ENCODE measurements at regions of chr1 and their contacts with region 1.

Region 1: DNA sequence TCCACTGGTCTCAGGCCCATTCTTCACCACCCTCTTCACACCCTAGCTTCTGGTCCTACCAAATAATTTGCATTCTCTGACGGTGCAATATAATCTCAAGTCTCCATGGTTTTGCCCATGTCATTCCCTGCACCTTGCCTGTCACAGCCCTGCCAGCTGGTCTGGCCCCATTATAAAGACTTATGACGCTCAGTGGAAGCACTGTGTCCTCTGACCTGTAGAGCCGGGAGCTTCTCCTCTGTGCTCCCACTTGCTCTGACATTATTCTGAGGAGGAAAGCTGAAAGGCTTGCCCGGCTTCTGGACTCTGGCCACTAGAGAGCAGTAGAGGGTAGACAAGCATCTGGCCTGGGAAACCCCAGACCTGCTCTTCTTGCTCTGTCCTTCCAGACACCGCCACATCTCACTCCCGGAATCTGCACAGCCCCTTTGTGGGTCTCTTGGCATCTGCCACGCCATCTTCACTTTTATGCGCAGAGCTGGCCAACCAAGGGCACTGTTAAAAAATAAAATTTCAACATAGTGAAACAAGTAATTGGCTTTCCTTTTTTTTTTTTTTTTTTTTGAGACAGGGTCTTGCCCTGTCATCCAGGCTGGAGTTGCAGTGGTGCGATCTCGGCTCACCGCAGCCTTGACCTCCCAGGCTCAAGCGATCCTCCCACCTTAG is 44.4 kb downstream of the NENF start:
- DNase-seq: peak; percentile 83
- H3K4me3 ChIP-seq: no peak overlapping the region
- H3K27ac ChIP-seq: no peak overlapping the region
- H3K4me1 ChIP-seq: peaks cover 13% of the 10 kb centered on the region
- H3K27me3 ChIP-seq: peaks cover 0 to 8% of the 10 kb centered on the region in 2 experiments
- CTCF ChIP-seq: peak; percentile 86 to 93
- POLR2A ChIP-seq: no peak

Region 2: GRCh38 chr1:212498283-212499040 is 21.3 kb after region 1 on chr1:
- CTCF ChIA-PET with region 1: interaction called, 16 read pairs
- POLR2A ChIA-PET with region 1: no interaction called
- dilution Hi-C with region 1: no loop called
- intact Hi-C with region 1: no loop called
- DNase-seq: no peak
- H3K4me3 ChIP-seq: no peak overlapping the region
- H3K27ac ChIP-seq: no peak overlapping the region
- H3K4me1 ChIP-seq: no peaks in the 10 kb centered on the region
- H3K27me3 ChIP-seq: peaks cover 12 to 18% of the 10 kb centered on the region in 2 experiments
- CTCF ChIP-seq: no peak
- POLR2A ChIP-seq: no peak

Region 3: GRCh38 chr1:212595787-212596714 is 118.9 kb after region 1 on chr1:
- CTCF ChIA-PET with region 1: interaction called, 21 read pairs
- POLR2A ChIA-PET with region 1: no interaction called
- dilution Hi-C with region 1: no loop called
- intact Hi-C with region 1: loop called (anchors 1 kb)
- DNase-seq: peak; percentile 96
- H3K4me3 ChIP-seq: peak overlapping the region in 1 of 3 experiments; percentile 41
- H3K27ac ChIP-seq: peak overlapping the region; percentile 99
- H3K4me1 ChIP-seq: peaks cover 15% of the 10 kb centered on the region
- H3K27me3 ChIP-seq: peaks cover 8 to 11% of the 10 kb centered on the region in 2 experiments
- CTCF ChIP-seq: peak; percentile 55 to 81
- POLR2A ChIP-seq: no peak

Region 4: DNA sequence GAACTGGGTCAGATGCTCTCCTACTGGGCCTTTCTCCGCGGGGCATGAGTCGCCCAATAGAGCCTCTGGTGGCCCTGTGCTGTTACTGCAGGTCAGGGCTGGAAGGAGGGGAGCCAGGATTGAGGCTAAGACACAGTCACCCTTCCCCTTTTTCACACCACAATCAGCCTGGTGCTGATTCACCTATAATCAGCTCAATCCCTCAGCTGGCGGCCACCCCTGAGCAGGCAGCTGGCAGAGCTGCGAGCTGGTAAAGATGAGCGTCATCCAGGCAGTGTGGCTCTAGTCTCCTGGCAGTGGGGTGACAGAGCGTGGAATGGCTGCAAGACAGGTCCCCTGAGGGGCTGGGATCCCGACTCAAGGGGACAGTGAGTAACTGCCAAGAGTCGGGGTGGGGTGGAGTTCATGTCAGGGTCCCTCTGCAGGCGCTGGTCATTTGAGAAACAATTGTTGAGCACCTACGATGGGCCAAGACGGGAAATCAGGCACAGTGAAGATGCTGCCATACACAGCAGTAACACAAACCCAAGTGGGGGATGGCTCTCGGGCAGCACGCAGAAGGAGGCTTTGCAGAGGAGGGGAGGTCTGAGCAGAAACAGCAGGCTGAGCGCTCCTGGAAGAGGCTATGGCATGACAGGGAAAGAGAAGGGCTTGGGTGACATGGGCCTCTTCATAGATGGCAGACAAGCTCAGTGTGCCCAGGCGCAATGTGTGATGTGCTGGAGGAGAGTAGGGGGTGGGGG is 153.2 kb after region 1 on chr1:
- CTCF ChIA-PET with region 1: interaction called, 24 read pairs
- POLR2A ChIA-PET with region 1: interaction called, 4 read pairs
- dilution Hi-C with region 1: no loop called
- intact Hi-C with region 1: loop called (anchors 1 kb)
- DNase-seq: peak; percentile 42
- H3K4me3 ChIP-seq: no peak overlapping the region
- H3K27ac ChIP-seq: no peak overlapping the region
- H3K4me1 ChIP-seq: peaks cover 9% of the 10 kb centered on the region
- H3K27me3 ChIP-seq: peaks cover 0 to 6% of the 10 kb centered on the region in 2 experiments
- CTCF ChIP-seq: peak; percentile 73 to 86
- POLR2A ChIP-seq: no peak

Region 5: GRCh38 chr1:212721388-212722247 is 244.5 kb after region 1 on chr1:
- CTCF ChIA-PET with region 1: interaction called, 4 read pairs
- POLR2A ChIA-PET with region 1: no interaction called
- dilution Hi-C with region 1: no loop called
- intact Hi-C with region 1: loop called (anchors 1 kb)
- DNase-seq: peak; percentile 25
- H3K4me3 ChIP-seq: no peak overlapping the region
- H3K27ac ChIP-seq: no peak overlapping the region
- H3K4me1 ChIP-seq: peaks cover 16% of the 10 kb centered on the region
- H3K27me3 ChIP-seq: peaks cover 0 to 2% of the 10 kb centered on the region in 2 experiments
- CTCF ChIP-seq: no peak
- POLR2A ChIP-seq: no peak

Region 6: DNA sequence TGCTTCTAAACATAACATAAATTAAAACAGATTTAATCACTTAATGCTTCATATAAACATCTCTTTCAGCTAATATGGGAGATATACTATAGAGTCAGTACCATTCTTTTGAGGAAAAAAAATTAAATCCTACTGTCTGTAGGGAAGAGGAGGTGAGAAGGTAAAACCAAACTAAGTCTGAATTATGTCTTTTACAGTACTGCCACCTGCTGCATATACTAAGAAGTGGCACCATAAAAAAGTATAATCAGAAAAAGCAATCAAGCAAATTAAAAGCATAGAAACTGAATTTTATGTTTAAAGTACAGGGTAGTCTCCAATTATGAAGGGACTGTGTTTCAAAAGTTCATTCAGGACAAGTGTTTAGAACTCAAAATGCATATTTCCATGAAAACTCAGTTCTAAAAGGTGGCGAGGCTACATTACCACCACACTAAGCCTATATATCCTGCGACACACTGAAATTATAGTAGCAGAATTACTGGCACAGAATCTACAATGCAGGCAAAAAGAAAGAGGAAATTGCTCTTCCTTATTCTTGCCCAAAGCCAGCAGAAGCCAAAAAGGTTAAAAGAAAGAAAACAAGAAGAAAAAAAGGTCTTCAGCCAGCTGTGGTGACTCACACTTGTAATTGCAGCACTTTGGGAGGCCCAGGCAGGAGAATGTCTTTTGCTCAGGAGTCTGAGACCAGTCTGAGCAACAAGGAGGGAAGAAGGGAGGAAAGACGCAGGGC is 305.4 kb after region 1 on chr1:
- CTCF ChIA-PET with region 1: interaction called, 21 read pairs
- POLR2A ChIA-PET with region 1: no interaction called
- dilution Hi-C with region 1: no loop called
- intact Hi-C with region 1: loop called (anchors 1 kb)
- DNase-seq: peak; percentile 79
- H3K4me3 ChIP-seq: no peak overlapping the region
- H3K27ac ChIP-seq: peak overlapping the region; percentile 15
- H3K4me1 ChIP-seq: peaks cover 15% of the 10 kb centered on the region
- H3K27me3 ChIP-seq: no peaks in the 10 kb centered on the region
- CTCF ChIP-seq: peak; percentile 34 to 38
- POLR2A ChIP-seq: no peak

Measured in endothelial cell of umbilical vein (primary cell).